Right ventricle myocardium inferior (tissue), 1 donor: ENCODE measurements at regions of chr14 and their contacts with region 1.

Region 1: GRCh38 chr14:100383727-100384158 is 60.6 kb downstream of the SLC25A47 start:
- DNase-seq: peak; percentile 88
- ATAC-seq: peak; percentile 59

Region 2: GRCh38 chr14:100645192-100645990 is 261.6 kb after region 1 on chr14:
- intact Hi-C with region 1: loop called (anchors 2 kb)
- DNase-seq: peak; percentile 89
- ATAC-seq: peak; percentile 85

Region 3: GRCh38 chr14:101628471-101628966 is 1244.8 kb after region 1 on chr14:
- intact Hi-C with region 1: loop called (anchors 2 kb)
- DNase-seq: peak; percentile 90
- ATAC-seq: peak; percentile 90